HCT116 (cell line): ENCODE measurements at regions of chrX and their contacts with region 1.

Region 1: GRCh38 chrX:154478728-154479622 is at the start of gene LAGE3:
- DNase-seq: peak; percentile 69
- ATAC-seq: peak; percentile 89
- H3K4me3 ChIP-seq: peak within 1 kb of the TSS; percentile 53 to 60
- H3K27ac ChIP-seq: peak within 1 kb of the TSS; percentile 87
- H3K4me1 ChIP-seq: peaks cover 3 to 10% of the 10 kb centered on the region in 2 experiments; a peak in 3 of 4 replicates
- H3K27me3 ChIP-seq: no peaks in the 10 kb centered on the region
- CTCF ChIP-seq: no peak
- POLR2A ChIP-seq: peak; percentile 45
- RAD21 ChIP-seq: no peak
- total RNA-seq, gene LAGE3: 42.8 TPM

Region 2: DNA sequence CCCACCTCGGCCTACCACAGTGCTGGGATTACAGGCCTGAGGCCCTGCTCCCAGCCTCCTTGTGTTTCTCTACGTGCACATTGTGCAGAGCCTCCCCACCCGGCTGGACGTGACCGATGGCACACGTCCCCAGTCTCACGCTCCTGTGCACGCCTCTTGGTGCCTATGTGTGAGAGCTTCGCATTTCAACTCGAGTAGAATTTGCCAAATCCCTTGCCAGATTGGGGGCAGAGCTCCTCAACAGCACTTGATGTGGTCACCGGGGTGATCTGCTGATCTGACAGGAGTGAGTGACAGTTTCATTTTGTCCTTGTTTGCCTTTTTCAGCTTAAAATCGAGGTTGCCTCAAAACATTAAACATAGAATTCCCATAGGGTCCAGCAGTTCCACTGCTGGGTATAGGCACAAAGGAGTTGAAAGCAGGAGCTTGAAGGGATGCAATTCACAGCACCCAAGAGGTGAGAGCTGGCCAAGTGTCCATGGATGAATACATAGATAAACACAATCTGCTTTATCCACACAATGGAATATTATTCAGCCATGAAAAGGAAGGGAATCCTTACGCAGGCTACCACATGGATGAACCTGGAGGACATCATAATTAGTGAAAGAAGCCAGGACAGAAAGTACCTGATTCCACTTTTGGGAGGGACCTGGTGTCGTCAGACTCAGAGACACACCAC is 488.9 kb before region 1 on chrX:
- CTCF ChIA-PET with region 1: no interaction called
- POLR2A ChIA-PET with region 1: no interaction called
- RAD21 ChIA-PET with region 1: no interaction called
- intact Hi-C with region 1: no loop called
- DNase-seq: no peak
- ATAC-seq: no peak
- H3K4me3 ChIP-seq: no peak overlapping the region
- H3K27ac ChIP-seq: no peak overlapping the region
- H3K4me1 ChIP-seq: no peaks in the 10 kb centered on the region
- H3K27me3 ChIP-seq: no peaks in the 10 kb centered on the region
- CTCF ChIP-seq: no peak
- POLR2A ChIP-seq: no peak
- RAD21 ChIP-seq: no peak

Region 3: DNA sequence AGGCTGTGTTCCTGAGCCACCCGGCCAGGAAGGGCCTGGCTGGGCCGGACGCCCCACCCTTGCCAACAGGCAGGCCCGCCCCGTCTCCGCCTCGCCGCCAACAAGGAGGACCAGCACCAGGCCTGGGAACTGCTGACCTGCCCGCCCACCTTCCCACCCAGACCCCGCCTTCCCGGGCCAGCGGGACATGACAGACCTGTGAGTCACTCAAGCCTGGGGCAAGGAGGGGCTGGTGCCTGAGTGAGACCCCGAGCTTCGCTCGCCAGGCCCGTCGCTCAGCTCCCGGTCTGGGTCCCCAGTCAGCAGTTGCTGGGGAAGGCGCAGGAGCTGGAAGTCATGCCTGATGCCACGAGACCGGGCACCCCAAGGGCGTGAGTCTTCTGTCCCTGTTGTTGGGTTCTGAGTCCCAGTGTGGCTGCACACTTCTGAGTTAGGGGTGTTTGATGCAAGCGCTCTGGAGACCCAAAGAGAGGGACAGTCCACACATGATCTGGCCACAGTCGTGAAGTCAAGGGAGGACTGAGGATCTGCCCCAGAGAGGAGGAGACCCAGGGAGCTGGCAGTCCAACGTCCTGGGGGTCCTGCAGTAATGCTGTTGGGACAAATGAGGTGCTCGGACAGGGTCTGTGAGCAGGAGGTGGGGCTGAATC is 69.6 kb before region 1 on chrX and contains the start of gene DNASE1L1:
- CTCF ChIA-PET with region 1: no interaction called
- POLR2A ChIA-PET with region 1: no interaction called
- RAD21 ChIA-PET with region 1: no interaction called
- intact Hi-C with region 1: loop called (anchors 5 kb)
- DNase-seq: no peak
- ATAC-seq: peak; percentile 81
- H3K4me3 ChIP-seq: peak within 1 kb of the TSS; percentile 54 to 64
- H3K27ac ChIP-seq: peak within 1 kb of the TSS; percentile 91
- H3K4me1 ChIP-seq: peaks cover 15 to 35% of the 10 kb centered on the region in 2 experiments
- H3K27me3 ChIP-seq: no peaks in the 10 kb centered on the region
- CTCF ChIP-seq: no peak
- POLR2A ChIP-seq: no peak
- RAD21 ChIP-seq: no peak
- total RNA-seq, gene DNASE1L1: 16.5 TPM

Region 4: DNA sequence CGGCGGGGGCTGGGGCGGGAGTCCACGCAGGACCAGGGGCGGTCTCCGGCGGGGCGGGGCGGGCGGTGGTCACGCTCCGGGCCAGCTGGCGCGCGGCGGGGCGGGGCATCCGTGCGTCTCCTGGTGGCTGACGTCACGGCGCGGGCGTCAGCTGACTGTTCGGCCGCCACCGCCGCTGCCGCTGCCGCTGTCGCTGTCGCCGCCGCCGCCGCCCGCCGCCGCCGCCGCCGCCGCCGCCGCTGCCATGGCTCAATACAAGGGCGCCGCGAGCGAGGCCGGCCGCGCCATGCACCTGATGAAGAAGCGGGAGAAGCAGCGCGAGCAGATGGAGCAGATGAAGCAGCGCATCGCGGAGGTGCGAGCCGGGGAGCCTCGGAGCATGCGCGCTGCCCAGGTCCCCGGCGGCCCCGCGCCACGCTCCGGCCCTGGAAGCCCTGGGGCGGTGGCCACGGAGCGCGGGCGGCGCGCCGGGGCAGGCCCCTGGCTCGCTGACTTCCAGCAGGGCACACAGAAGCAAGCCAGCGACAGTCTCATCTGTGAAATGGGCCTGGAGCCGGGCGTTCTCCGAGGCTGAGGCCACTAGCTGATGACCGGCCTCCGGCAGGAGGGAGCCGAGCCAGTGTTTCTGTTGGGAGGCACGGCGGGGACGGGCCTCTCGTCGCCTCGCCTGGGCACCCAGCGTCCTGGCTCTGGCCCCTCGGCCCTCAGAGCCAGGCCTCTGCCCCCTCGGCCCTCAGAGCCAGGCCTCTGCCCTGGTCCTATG is 34.8 kb before region 1 on chrX and contains the start of gene FAM50A:
- CTCF ChIA-PET with region 1: no interaction called
- POLR2A ChIA-PET with region 1: no interaction called
- RAD21 ChIA-PET with region 1: interaction called in 1 of 2 experiments, 3 read pairs
- intact Hi-C with region 1: loop called (anchors 5 kb)
- DNase-seq: no peak
- ATAC-seq: peak; percentile 88
- H3K4me3 ChIP-seq: peak within 1 kb of the TSS; percentile 59 to 68
- H3K27ac ChIP-seq: peak within 1 kb of the TSS; percentile 70
- H3K4me1 ChIP-seq: peaks cover 6 to 16% of the 10 kb centered on the region in 2 experiments; a peak in 3 of 4 replicates
- H3K27me3 ChIP-seq: no peaks in the 10 kb centered on the region
- CTCF ChIP-seq: no peak
- POLR2A ChIP-seq: no peak
- RAD21 ChIP-seq: no peak
- total RNA-seq, gene FAM50A: 46.5 TPM